ENCODE measurements at regions of chr4 and their contacts with region 1.

Region 1: GRCh38 chr4:41339812-41340809 is 83.4 kb downstream of the UCHL1 start:
- DNase-seq: peak; percentile 71 to 81 (median 81)
- H3K4me3 ChIP-seq: no peak overlapping the region
- H3K27ac ChIP-seq: no peak overlapping the region
- H3K4me1 ChIP-seq: peaks cover 0 to 7% (median 0%) of the 10 kb centered on the region in 4 experiments
- H3K27me3 ChIP-seq: no peaks in the 10 kb centered on the region

Region 2: GRCh38 chr4:41360214-41360920 is 20.3 kb after region 1 on chr4:
- CTCF ChIA-PET with region 1: interaction called, 10 read pairs
- POLR2A ChIA-PET with region 1: no interaction called
- DNase-seq: peak; percentile 48 to 72 (median 58)
- H3K4me3 ChIP-seq: peak overlapping the region; percentile 61 to 92 (median 73)
- H3K27ac ChIP-seq: no peak overlapping the region
- H3K4me1 ChIP-seq: peaks cover 0 to 53% (median 26%) of the 10 kb centered on the region in 4 experiments
- H3K27me3 ChIP-seq: peaks cover 0 to 9% (median 0%) of the 10 kb centered on the region in 5 experiments

Region 3: GRCh38 chr4:41661442-41662076 is 321.4 kb after region 1 on chr4:
- CTCF ChIA-PET with region 1: interaction called, 15 read pairs
- POLR2A ChIA-PET with region 1: no interaction called
- DNase-seq: peak; percentile 38 to 73 (median 62)
- H3K4me3 ChIP-seq: no peak overlapping the region
- H3K27ac ChIP-seq: no peak overlapping the region
- H3K4me1 ChIP-seq: no peaks in the 10 kb centered on the region
- H3K27me3 ChIP-seq: peaks cover 0 to 2% (median 0%) of the 10 kb centered on the region in 5 experiments

Region 4: GRCh38 chr4:41882625-41883347 is 542.7 kb after region 1 on chr4:
- CTCF ChIA-PET with region 1: no interaction called
- POLR2A ChIA-PET with region 1: no interaction called
- DNase-seq: peak; percentile 49 to 72 (median 70)
- H3K4me3 ChIP-seq: peak overlapping the region in 4 of 7 experiments; percentile 20 to 68 (median 46)
- H3K27ac ChIP-seq: no peak overlapping the region
- H3K4me1 ChIP-seq: peaks cover 0 to 25% (median 13%) of the 10 kb centered on the region in 4 experiments
- H3K27me3 ChIP-seq: peaks cover 4 to 91% (median 31%) of the 10 kb centered on the region in 5 experiments